ENCODE measurements at regions of chr1 and their contacts with region 1.

Region 1: DNA sequence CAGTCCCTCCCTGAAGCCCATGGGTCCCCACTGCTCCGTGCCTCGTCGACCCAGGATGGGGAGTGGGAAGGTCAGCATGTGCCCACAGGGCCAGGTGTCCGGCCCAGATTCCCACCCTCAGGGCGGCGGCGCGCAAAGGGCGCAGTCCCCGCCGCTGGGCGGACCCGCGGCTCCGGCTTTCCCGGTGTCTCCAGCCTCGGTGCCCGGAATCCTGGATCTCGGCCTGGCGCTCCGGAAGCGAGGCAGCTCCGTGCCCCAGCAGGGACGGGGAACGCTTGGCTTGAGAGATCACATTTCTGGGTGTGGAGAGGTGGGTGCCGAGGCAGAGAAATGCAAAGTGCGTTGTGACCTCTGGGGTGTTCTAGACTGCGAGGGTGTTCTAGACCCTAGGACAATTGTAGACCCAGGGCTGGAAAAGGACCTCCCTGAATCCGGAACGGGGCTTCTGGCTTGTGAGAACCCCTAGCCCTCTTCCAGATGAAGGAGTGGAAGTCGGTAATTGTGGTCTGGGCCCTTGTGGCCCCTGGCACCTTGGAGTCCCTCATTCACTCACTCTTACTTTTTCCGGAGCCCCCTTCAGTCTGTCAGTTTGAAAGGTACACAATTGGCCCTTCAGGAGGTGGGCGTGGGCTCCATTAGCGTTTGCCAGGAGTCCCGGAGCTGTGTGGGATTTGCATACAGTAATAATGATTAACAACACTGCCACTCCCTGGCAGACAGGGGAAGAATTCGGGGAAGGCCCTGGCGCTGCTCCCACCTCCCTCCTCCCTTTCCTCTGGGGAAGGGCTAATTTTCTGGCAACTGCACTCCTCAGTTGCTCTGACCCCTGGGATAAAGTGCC is 1.6 kb upstream of the KCND3 start:
- DNase-seq: peak; percentile 84
- H3K4me3 ChIP-seq: peak overlapping the region; percentile 65 to 79 (median 75)
- H3K27ac ChIP-seq: peak overlapping the region; percentile 74 to 86 (median 84)
- H3K4me1 ChIP-seq: peaks cover 0 to 59% (median 47%) of the 10 kb centered on the region in 4 donors
- H3K27me3 ChIP-seq: no peaks in the 10 kb centered on the region
- CTCF ChIP-seq: no peak
- EP300 ChIP-seq: no peak
- POLR2A ChIP-seq: no peak

Region 2: GRCh38 chr1:111789666-111790316 is 201.3 kb before region 1 on chr1:
- intact Hi-C with region 1: loop called (anchors 1 kb)
- DNase-seq: no peak
- H3K4me3 ChIP-seq: no peak overlapping the region
- H3K27ac ChIP-seq: peak overlapping the region in 3 of 4 donors; percentile 26 to 43 (median 36)
- H3K4me1 ChIP-seq: peaks cover 0 to 9% (median 0%) of the 10 kb centered on the region in 4 donors
- H3K27me3 ChIP-seq: no peaks in the 10 kb centered on the region
- CTCF ChIP-seq: peak in 1 of 4 experiments; percentile 35
- EP300 ChIP-seq: peak in 1 of 4 donors; percentile 6
- POLR2A ChIP-seq: no peak

Region 3: DNA sequence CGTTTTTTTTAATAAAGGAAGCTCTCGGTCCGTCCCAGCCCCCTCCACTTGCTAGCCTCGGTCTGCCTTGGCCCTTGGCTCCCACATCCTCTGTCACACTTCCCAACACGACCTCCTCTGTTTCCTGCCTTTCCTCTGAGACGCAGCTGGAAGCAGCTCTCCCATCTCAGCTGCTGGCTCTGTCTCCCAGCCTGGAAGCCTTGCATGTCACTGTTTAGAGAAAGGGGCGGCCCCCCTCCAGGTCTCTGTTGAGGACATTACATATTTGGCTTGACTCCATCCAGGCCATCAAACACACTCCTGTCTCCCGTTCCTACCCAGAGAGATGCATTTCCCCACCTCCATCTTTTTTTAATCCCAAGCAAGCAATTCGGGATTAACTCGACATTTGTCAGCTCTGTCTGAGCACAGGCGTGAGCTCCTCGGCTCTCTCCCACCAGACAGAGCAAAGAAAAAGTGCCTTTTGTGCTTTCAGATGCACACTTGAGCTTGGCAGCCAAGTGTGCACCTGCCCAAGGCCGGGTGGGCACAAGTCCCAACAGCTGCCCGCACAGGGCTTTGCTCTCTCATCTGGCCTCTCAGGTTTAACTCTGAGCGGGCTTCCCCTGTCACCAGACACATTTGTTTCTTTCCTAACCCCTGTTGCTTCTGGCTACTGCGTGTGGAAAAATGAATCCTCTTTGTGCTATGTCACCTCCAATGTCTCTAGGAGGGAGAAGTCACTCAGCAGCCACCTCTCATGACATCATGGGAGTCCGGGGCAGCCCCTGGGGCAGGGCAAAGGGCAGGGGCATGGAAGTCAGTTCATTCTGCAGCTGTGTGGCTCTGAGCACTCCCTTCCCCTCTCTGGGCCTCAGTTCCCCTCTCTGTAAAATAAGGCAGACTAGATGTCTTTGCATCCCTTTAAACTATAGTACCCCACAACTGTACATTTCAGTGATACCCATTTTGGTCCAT is 109.9 kb before region 1 on chr1:
- intact Hi-C with region 1: loop called (anchors 5 kb)
- DNase-seq: peak; percentile 78
- H3K4me3 ChIP-seq: no peak overlapping the region
- H3K27ac ChIP-seq: peak overlapping the region in 3 of 4 donors; percentile 34 to 70 (median 56)
- H3K4me1 ChIP-seq: peaks cover 0 to 30% (median 28%) of the 10 kb centered on the region in 4 donors
- H3K27me3 ChIP-seq: no peaks in the 10 kb centered on the region
- CTCF ChIP-seq: no peak
- EP300 ChIP-seq: no peak
- POLR2A ChIP-seq: no peak

Region 4: DNA sequence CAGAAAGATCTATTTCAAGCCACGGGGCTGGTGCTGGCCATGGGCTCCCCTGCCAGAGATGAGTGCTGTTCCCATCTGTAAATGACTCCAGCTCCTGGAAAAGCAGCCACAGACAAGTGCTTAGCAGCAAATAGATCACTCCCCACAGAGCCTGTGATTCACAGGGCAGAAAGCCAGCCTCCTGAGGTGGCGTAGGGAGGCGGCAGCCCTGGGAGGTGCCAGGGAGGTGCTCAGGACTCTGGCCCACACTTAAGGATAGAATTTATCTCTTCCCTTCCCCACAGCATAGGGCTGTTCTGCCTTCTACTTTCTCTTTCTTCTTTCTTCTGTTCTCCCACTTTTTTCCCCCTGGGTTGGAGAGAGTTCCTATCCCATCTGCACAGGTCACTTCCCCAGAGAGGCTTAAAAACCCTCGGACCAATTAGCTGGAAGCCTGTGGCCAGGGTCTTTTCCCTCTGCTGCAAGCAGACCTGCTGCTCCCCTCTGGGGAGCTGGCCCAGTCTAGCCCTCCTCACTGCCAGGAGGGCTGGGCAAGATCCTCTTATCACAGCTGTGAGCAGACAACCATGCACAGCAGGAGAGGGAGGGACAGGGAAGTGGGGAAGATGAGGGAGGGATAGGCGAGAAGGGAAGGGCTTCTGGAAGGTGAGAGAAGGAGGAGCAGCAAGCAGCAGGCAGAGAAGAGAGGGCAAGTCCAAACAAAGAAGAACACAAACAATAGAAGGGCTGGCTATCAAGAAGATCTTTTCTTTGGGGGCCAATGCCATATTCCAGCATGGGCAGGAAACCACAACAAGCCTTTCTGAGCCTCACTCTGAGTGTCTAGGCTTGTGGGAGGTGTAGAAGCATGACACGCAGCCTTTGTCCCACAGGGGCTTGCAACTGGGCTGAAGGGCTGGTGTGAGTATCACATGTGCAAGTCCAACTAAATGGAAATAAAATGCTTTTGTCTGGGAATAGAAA is 42.6 kb before region 1 on chr1:
- intact Hi-C with region 1: loop called (anchors 5 kb)
- DNase-seq: peak; percentile 86
- H3K4me3 ChIP-seq: peak overlapping the region in 1 of 4 donors; percentile 6
- H3K27ac ChIP-seq: peak overlapping the region; percentile 72 to 79 (median 76)
- H3K4me1 ChIP-seq: peaks cover 0 to 18% (median 17%) of the 10 kb centered on the region in 4 donors
- H3K27me3 ChIP-seq: no peaks in the 10 kb centered on the region
- CTCF ChIP-seq: no peak
- EP300 ChIP-seq: no peak
- POLR2A ChIP-seq: no peak

Region 5: DNA sequence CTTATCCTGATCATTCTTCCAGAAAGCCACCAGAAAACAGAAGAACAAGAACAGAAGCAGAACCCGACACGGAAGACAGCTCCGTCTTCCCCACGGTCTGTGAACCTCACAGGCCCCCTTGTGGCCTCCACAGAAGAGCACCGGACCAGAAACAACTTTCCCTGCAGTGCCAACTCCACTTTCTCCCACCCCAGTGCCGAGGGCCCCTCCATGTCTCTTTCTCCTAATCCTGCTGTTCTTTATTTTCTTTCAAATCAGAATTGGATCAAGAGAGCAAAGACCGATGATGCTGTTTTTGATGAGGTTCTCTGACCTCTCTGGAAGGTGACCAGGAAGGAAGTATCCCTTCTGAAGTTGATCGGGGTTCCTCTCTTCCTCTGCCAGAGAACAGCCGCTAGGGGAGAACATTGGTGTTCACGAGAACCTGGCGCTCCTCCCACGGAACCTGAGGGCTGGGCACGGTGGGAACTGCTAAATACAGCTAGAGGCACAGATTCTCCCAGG is 346.0 kb after region 1 on chr1:
- intact Hi-C with region 1: loop called (anchors 5 kb)
- DNase-seq: peak; percentile 75
- H3K4me3 ChIP-seq: no peak overlapping the region
- H3K27ac ChIP-seq: no peak overlapping the region
- H3K4me1 ChIP-seq: no peaks in the 10 kb centered on the region
- H3K27me3 ChIP-seq: no peaks in the 10 kb centered on the region
- CTCF ChIP-seq: peak in 3 of 4 experiments; percentile 48 to 63 (median 56)
- EP300 ChIP-seq: no peak
- POLR2A ChIP-seq: no peak

Measured in sigmoid colon (tissue), 7 donors.